Activated T-helper 2 cell treated with anti-CD3 and anti-CD28 coated beads, Interferon-gamma antibody, Interleukin-2, Interleukin-4, amounts not matched to agents 10 μg/mL and 5 μg/mL and 100 μg/mL, durations not matched to agents 14 hours and 24 hours and 36 hours (primary cell): ENCODE measurements at regions of chr5 and their contacts with region 1.

Region 1: GRCh38 chr5:38441453-38442246 is 114.8 kb downstream of the LIFR start:
- DNase-seq: peak; percentile 70
- H3K4me3 Mint-ChIP-seq: no peak overlapping the region
- H3K27ac Mint-ChIP-seq: no peak overlapping the region
- H3K4me1 Mint-ChIP-seq: no peaks in the 10 kb centered on the region
- H3K27me3 Mint-ChIP-seq: peaks cover 30% of the 10 kb centered on the region

Region 2: DNA sequence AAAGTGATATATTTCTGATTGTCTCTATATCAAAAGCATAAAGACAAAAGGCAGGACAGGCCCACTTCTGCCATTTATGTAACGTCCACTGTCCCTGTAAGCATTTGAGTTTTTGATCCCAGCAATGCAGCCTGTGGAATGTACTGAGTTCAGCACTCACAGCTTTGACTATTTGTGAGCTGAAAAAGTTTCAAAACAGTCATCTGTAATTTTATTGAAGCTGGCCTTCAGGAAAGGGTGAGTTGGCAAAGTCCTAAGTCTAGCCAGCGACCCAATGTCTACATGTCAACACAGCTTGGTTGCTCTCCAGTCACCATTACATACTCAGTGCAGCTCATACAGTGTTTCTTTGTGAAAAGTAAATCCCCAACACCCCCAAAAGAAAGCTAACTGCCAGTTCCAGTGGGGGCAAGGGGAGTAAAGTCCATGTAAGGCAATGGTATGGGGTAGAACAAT is 105.1 kb after region 1 on chr5:
- intact Hi-C with region 1: no loop called
- DNase-seq: no peak
- H3K4me3 Mint-ChIP-seq: no peak overlapping the region
- H3K27ac Mint-ChIP-seq: no peak overlapping the region
- H3K4me1 Mint-ChIP-seq: no peaks in the 10 kb centered on the region
- H3K27me3 Mint-ChIP-seq: peaks cover 8% of the 10 kb centered on the region

Region 3: GRCh38 chr5:38556599-38557305 is 115.1 kb after region 1 on chr5 and contains the start of gene LIFR:
- intact Hi-C with region 1: loop called (anchors 1 kb)
- DNase-seq: peak; percentile 37
- H3K4me3 Mint-ChIP-seq: peak within 1 kb of the TSS; percentile 83
- H3K27ac Mint-ChIP-seq: no peak within 1 kb of the TSS
- H3K4me1 Mint-ChIP-seq: peaks cover 11% of the 10 kb centered on the region
- H3K27me3 Mint-ChIP-seq: peaks cover 67% of the 10 kb centered on the region
- total RNA-seq, gene LIFR: 0.25 TPM in 1 of 2 replicates, not detected in the other

Region 4: GRCh38 chr5:38666668-38667498 is 225.2 kb after region 1 on chr5:
- intact Hi-C with region 1: loop called (anchors 1 kb)
- DNase-seq: no peak
- H3K4me3 Mint-ChIP-seq: no peak overlapping the region
- H3K27ac Mint-ChIP-seq: no peak overlapping the region
- H3K4me1 Mint-ChIP-seq: no peaks in the 10 kb centered on the region
- H3K27me3 Mint-ChIP-seq: peaks cover 4% of the 10 kb centered on the region

Region 5: GRCh38 chr5:38809388-38810359 is 368.0 kb after region 1 on chr5:
- intact Hi-C with region 1: loop called (anchors 1 kb)
- DNase-seq: peak; percentile 24
- H3K4me3 Mint-ChIP-seq: no peak overlapping the region
- H3K27ac Mint-ChIP-seq: no peak overlapping the region
- H3K4me1 Mint-ChIP-seq: peaks cover 10% of the 10 kb centered on the region
- H3K27me3 Mint-ChIP-seq: peaks cover 14% of the 10 kb centered on the region

Region 6: DNA sequence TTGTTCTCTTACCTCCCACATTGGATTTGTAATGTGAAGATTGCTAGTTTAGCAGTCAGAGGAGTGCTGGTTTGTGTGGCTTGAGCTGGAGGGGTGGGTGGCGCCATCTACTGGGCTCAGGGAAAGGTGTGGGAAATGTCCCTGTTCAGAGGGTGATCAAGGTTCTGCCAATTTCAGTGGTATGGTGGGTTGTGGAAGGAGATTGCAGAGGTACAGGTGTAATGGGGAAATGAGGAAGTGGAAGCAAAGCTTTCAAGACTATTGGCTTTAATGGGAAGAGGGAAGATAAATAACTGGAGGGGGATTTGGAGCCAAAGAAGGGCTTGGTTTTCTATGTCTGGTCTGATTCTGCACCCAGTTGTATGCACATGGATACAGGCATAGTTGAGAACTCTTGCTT is 480.5 kb after region 1 on chr5:
- intact Hi-C with region 1: loop called (anchors 2 kb)
- DNase-seq: peak; percentile 22
- H3K4me3 Mint-ChIP-seq: no peak overlapping the region
- H3K27ac Mint-ChIP-seq: no peak overlapping the region
- H3K4me1 Mint-ChIP-seq: no peaks in the 10 kb centered on the region
- H3K27me3 Mint-ChIP-seq: peaks cover 32% of the 10 kb centered on the region